Mammary epithelial cell (primary cell): ENCODE measurements at regions of chr7 and their contacts with region 1.

Region 1: GRCh38 chr7:945556-946255 is 8.8 kb downstream of the ADAP1 start:
- DNase-seq: peak; percentile 98
- H3K4me3 ChIP-seq: peak overlapping the region in 2 of 3 experiments; percentile 11 to 31
- H3K27ac ChIP-seq: peak overlapping the region; percentile 69
- H3K4me1 ChIP-seq: peaks cover 34% of the 10 kb centered on the region
- H3K27me3 ChIP-seq: no peaks in the 10 kb centered on the region
- CTCF ChIP-seq: no peak

Region 2: GRCh38 chr7:929311-929711 is 16.4 kb before region 1 on chr7:
- CTCF ChIA-PET with region 1: no interaction called
- dilution Hi-C with region 1: no loop called
- in situ Hi-C with region 1: no loop called
- intact Hi-C with region 1: loop called (anchors 2 kb)
- DNase-seq: no peak
- H3K4me3 ChIP-seq: no peak overlapping the region
- H3K27ac ChIP-seq: no peak overlapping the region
- H3K4me1 ChIP-seq: peaks cover 5% of the 10 kb centered on the region
- H3K27me3 ChIP-seq: no peaks in the 10 kb centered on the region
- CTCF ChIP-seq: no peak